Psoas muscle (tissue), 8 donors: ENCODE measurements at regions of chr6 and their contacts with region 1.

Region 1: DNA sequence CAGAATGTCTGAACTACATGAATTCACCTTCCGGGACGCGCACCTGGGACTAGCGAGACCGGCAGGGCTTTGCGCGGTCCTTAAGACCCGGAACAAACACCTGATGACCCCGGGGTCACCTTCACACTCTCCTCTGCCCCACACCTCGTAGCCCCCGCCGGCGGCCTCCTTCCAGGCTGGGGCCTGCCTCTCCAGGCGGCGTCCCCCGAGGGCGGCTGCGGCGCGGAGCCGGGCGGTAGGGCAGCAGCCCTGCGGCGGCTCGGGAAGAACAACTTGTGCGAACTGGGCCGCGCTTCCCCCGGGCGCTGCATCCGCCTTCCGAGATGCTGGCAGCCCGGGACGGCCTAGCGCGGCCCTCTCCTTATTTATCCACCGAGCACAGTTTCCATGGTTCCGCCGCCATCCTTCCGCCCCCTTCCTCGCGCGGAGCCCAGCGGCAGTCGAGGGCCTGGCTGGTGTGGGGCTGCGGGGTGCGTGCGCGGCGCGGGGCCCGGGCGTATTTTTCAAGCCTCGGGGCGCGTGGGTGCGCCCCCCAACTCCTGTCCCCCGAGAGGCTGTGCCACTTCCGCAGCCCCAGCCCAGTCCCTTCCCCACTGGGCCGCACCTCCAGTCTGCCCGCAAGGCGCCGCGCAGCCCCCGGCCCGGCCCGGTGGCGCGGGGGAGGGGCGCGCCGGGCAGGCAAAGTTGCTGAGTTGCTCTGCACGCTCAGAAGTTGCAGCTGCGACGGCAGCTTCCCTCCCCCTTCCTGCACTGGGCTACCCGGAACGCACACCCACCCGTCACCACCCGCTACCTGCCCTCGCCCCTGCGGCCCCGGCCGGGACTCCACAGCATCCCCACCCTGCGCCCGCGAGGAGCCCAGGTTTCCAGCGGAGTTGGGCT is 56.3 kb upstream of the RREB1 start:
- DNase-seq: peak; percentile 61 to 81
- ATAC-seq: peak; percentile 76 to 79 (median 78)
- H3K4me3 ChIP-seq: peak overlapping the region; percentile 70
- H3K27ac ChIP-seq: peak overlapping the region; percentile 96
- H3K4me1 ChIP-seq: peaks cover 3% of the 10 kb centered on the region
- H3K27me3 ChIP-seq: no peaks in the 10 kb centered on the region
- CTCF ChIP-seq: no peak

Region 2: GRCh38 chr6:6758915-6759654 is 292.4 kb before region 1 on chr6:
- intact Hi-C with region 1: loop called in 1 of 2 experiments (anchors 5 kb)
- DNase-seq: no peak
- ATAC-seq: peak; percentile 77 to 96 (median 84)
- H3K4me3 ChIP-seq: peak overlapping the region; percentile 27
- H3K27ac ChIP-seq: no peak overlapping the region
- H3K4me1 ChIP-seq: peaks cover 5% of the 10 kb centered on the region
- H3K27me3 ChIP-seq: no peaks in the 10 kb centered on the region
- CTCF ChIP-seq: peak; percentile 55

Region 3: GRCh38 chr6:6942831-6943230 is 108.6 kb before region 1 on chr6:
- intact Hi-C with region 1: loop called in 1 of 2 experiments (anchors 5 kb)
- DNase-seq: peak; percentile 81 to 93
- ATAC-seq: peak; percentile 100
- H3K4me3 ChIP-seq: peak overlapping the region; percentile 20
- H3K27ac ChIP-seq: peak overlapping the region; percentile 91
- H3K4me1 ChIP-seq: peaks cover 17% of the 10 kb centered on the region
- H3K27me3 ChIP-seq: no peaks in the 10 kb centered on the region
- CTCF ChIP-seq: no peak

Region 4: DNA sequence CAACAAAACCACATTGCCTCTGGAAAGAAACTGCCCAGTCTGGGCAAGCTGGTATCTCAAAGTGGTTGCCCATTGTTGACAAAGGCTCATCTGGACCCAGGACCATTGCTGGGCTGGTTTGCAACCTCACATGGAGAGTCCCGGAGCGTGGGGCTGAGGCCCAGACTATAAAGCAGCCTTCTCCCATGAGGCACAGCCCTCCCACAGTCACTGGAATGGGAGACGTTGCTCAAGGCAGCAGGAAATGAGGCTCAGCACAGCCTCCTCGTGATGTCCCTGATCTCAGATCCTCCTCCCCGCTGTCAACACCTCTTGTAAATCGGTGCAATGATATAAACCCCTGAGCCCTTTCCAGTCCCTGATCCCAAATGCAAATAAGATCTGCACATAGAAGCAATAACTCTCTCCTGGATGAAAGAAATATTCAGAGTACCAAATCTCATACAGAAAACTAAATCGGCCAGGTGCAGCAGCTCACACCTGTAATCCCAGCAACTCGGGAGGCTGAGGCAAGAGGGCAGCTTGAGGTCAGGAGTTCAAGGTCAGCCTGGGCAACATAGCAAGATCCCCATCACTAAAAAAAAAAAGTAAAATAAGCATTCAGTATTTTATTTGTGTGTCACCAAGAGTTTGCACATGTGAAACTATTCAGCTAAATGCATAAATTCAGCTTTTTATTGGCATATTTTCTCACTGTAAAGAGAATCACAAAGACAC is 46.7 kb before region 1 on chr6:
- intact Hi-C with region 1: no loop called
- DNase-seq: no peak
- ATAC-seq: peak in 2 of 4 donors; percentile 58 to 75
- H3K4me3 ChIP-seq: no peak overlapping the region
- H3K27ac ChIP-seq: no peak overlapping the region
- H3K4me1 ChIP-seq: peaks cover 5% of the 10 kb centered on the region
- H3K27me3 ChIP-seq: no peaks in the 10 kb centered on the region
- CTCF ChIP-seq: no peak

Region 5: GRCh38 chr6:7107578-7108195 is 56.2 kb after region 1 on chr6 and contains the start of gene RREB1:
- intact Hi-C with region 1: loop called in 1 of 2 experiments (anchors 5 kb)
- DNase-seq: peak; percentile 67 to 77
- ATAC-seq: peak; percentile 81 to 86 (median 84)
- H3K4me3 ChIP-seq: peak within 1 kb of the TSS; percentile 84
- H3K27ac ChIP-seq: peak within 1 kb of the TSS; percentile 86
- H3K4me1 ChIP-seq: peaks cover 20% of the 10 kb centered on the region
- H3K27me3 ChIP-seq: no peaks in the 10 kb centered on the region
- CTCF ChIP-seq: no peak
- total RNA-seq, gene RREB1: 32.7 to 49.4 (median 39.6) TPM